Right ventricle myocardium inferior (tissue), 1 donor: ENCODE measurements at regions of chr17 and their contacts with region 1.

Region 1: GRCh38 chr17:36534840-36535668 is at the starts of genes MYO19 and PIGW:
- DNase-seq: peak; percentile 93
- ATAC-seq: peak; percentile 94
- total RNA-seq, gene MYO19: 16.1 TPM
- total RNA-seq, gene PIGW: 5.8 TPM

Region 2: DNA sequence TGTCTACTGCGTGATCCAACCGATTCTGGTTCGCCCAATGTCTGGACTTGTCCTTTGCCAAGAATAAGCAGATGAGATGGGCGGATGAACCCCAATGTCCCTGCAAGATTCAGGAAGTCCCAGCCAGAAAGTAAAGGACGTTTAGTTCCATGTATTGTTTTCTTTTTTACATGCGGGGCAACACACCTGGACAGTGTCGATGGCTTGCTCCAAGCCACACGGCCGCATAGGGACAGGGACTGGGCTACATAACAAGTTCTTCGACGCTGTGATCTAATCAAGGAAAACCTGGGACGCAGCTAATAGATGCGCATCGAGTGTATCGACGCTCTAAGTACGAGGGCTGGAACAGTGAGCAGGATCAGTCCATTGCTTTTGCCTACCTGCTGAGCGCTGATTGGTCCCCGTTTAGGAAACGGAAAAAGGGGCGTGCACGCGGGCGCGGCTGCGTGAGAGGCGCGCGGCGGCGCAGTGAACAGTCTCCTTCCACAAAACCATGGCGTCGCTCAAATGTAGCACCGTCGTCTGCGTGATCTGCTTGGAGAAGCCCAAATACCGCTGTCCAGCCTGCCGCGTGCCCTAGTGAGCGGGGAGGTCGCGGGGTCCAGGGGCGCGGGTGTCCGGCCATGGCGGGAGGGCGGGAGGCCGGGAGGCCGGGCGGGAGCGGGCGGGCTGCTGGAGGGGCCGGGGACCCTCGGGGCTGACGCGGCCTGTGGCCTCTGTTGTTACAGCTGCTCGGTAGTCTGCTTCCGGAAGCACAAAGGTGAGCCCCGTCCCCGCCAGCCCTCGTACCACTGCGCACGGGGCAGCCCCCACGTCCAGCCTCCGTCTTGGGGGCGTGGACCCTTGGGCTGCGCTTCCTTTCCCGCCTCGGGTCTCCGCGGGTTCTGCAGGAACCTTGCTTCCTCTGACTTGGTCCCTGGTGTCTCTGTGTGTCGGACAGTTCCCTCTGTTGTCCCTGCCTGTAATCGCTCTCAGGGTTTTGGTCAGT is 48.6 kb before region 1 on chr17 and contains the start of gene ZNHIT3:
- intact Hi-C with region 1: loop called (anchors 5 kb)
- DNase-seq: peak; percentile 96
- ATAC-seq: peak; percentile 93
- total RNA-seq, gene ZNHIT3: 21.3 TPM